Right ventricle myocardium superior (tissue), 1 donor: ENCODE measurements at regions of chr17 and their contacts with region 1.

Region 1: DNA sequence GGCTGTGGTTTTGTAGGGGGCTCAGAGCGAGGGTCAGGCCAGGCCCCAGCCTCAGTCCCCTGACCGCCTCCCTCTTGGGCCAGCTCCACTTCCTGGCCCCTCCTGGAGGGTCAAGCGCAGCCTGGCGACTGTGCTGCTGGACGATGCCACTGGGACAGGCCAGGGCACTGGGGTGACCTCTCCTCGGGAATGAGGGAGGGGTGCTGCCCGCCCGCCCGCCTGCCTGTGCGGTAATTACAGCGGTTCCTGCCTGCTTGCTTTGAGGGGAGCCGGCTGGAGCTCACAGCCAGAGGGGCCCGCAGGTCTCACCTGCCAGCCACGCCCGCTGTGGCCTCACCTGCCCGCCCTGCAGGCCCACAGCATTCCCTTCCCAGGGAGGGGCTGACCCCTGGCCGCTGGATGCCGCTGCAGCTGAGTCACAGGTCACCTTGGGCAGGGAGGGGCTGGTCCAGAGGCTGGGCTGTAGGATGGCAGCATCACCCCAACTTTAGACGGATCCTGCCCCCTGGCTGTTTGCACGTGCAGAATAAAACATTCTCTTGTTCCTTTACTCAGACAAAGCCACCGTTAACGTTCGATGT is 76.7 kb upstream of the CBX4 start:
- DNase-seq: no peak
- ATAC-seq: no peak

Region 2: DNA sequence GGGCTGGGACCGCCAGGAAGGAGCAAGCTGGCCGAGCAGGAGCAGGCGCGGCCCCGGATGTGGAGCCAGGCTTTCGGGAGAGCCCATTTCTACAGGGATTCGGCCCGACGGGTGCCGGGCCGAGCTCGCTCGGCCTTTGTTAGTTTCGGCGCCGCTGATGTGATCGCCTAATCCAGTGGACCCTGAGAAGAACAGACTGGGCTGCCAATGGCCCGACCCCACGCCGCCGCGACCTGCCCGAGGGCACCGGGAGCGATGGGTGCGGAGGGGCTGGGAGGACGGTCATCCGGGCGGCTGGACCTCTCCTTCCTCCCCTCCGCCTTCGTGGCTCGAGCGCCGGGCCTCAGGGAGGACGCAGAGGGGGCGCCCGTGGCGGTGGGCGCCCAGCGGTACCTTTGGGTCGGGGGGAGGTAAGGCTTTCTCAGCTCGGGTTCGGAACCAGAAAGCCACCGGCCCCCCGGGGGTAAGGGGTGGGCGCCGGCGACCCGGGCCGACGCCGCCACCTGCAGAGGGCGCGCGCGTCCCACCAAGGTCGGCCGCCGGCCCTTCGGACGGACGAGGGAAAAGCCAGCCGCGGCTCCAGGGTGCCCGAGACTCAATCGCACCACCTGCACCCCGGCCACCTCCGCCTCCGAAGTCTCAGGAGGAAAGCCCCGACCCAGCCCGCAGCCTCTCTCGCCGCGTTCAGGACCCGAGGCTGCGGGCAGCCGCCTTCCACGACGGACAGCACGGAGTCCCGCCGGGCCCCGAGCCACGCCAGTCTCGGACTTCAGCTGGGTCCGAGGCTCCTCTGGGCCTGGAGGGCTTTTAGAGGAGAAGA is 126.2 kb before region 1 on chr17:
- intact Hi-C with region 1: loop called (anchors 10 kb)
- DNase-seq: peak; percentile 64
- ATAC-seq: peak; percentile 79

Region 3: GRCh38 chr17:79991140-79991923 is 75.4 kb after region 1 on chr17:
- intact Hi-C with region 1: no loop called
- DNase-seq: peak; percentile 90
- ATAC-seq: peak; percentile 87